Activated naive CD4-positive, alpha-beta T cell treated with anti-CD3 and anti-CD28 coated beads, Interleukin-2, amount 10 ng/mL, durations not matched to agents 7 days and 5 days (primary cell): ENCODE measurements at regions of chr9 and their contacts with region 1.

Region 1: GRCh38 chr9:34899535-34900158 is 58.4 kb upstream of the PHF24 start:
- DNase-seq: peak; percentile 90
- H3K4me3 Mint-ChIP-seq: no peak overlapping the region
- H3K27ac Mint-ChIP-seq: no peak overlapping the region
- H3K4me1 Mint-ChIP-seq: no peaks in the 10 kb centered on the region
- H3K27me3 Mint-ChIP-seq: peaks cover 30% of the 10 kb centered on the region

Region 2: GRCh38 chr9:34578241-34579103 is 321.2 kb before region 1 on chr9:
- CTCF ChIA-PET with region 1: no interaction called
- DNase-seq: no peak
- H3K4me3 Mint-ChIP-seq: no peak overlapping the region
- H3K27ac Mint-ChIP-seq: no peak overlapping the region
- H3K4me1 Mint-ChIP-seq: peaks cover 4% of the 10 kb centered on the region
- H3K27me3 Mint-ChIP-seq: peaks cover 88% of the 10 kb centered on the region

Region 3: DNA sequence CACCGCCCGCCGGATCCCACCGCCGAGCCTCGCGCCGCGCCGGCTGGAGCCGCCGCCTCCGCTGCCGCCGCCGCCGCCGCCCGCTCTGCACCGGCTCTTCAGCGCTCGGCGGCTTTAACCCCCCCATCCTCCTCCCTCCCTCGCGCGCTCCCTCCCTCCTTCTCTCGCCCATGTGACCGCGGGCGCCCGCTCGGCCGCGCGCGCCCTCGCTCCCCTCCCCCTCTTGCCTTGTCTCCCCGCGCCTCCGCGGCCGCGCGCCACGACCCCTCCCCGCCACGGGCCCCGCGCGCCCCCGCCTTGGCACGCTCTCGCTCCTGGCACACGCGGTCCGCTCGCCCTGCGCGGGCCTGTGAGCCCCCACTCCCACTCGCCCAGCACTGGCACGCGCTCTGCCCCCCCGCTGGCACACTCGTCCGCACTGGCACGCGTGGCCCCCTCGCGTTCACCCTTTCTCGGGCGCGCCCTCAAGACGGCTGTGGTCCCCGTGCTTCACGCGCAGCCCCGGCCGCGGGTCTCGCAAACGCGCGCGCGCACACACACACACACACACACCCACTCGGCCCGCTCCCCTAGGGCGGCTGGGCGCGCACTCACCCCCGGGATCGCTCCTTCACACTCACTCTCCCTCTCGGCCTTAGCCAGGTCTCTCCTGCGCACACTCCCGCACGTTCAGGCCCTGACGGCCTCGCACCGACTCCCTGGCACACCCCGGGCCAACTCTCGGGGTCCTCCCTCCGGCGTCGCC is 309.8 kb before region 1 on chr9 and contains the start of gene CNTFR:
- CTCF ChIA-PET with region 1: no interaction called
- DNase-seq: peak; percentile 46
- H3K4me3 Mint-ChIP-seq: peak within 1 kb of the TSS; percentile 61
- H3K27ac Mint-ChIP-seq: peak within 1 kb of the TSS; percentile 62
- H3K4me1 Mint-ChIP-seq: peaks cover 33% of the 10 kb centered on the region
- H3K27me3 Mint-ChIP-seq: peaks cover 100% of the 10 kb centered on the region

Region 4: DNA sequence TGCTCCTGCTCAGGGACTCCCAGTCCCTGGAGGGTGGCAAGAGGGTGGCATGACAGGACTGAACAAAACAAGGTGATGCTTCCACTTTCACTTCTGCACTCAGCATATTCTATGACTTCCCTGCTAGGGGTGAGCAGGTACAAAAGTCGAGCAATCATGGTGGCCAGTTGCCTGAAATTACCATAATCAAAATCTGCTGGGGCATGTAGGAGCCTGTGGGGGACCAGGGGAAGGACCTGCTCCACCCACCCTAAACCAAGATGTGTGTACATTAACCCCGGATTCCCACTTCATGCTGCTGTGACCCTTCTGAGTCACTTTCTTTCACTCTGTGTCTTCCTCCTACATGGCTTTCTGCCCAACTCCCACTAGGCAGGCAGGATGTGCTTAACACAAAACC is 14.9 kb before region 1 on chr9:
- CTCF ChIA-PET with region 1: interaction called, 17 read pairs
- DNase-seq: peak; percentile 28
- H3K4me3 Mint-ChIP-seq: no peak overlapping the region
- H3K27ac Mint-ChIP-seq: peak overlapping the region; percentile 46
- H3K4me1 Mint-ChIP-seq: no peaks in the 10 kb centered on the region
- H3K27me3 Mint-ChIP-seq: peaks cover 8% of the 10 kb centered on the region

Region 5: GRCh38 chr9:34985311-34985899 is 85.8 kb after region 1 on chr9:
- CTCF ChIA-PET with region 1: interaction called, 91 read pairs
- DNase-seq: peak; percentile 77
- H3K4me3 Mint-ChIP-seq: no peak overlapping the region
- H3K27ac Mint-ChIP-seq: no peak overlapping the region
- H3K4me1 Mint-ChIP-seq: peaks cover 65% of the 10 kb centered on the region
- H3K27me3 Mint-ChIP-seq: no peaks in the 10 kb centered on the region

Region 6: GRCh38 chr9:34994260-34994899 is 94.7 kb after region 1 on chr9:
- CTCF ChIA-PET with region 1: interaction called, 21 read pairs
- DNase-seq: no peak
- H3K4me3 Mint-ChIP-seq: no peak overlapping the region
- H3K27ac Mint-ChIP-seq: no peak overlapping the region
- H3K4me1 Mint-ChIP-seq: peaks cover 13% of the 10 kb centered on the region
- H3K27me3 Mint-ChIP-seq: peaks cover 6% of the 10 kb centered on the region

Region 7: DNA sequence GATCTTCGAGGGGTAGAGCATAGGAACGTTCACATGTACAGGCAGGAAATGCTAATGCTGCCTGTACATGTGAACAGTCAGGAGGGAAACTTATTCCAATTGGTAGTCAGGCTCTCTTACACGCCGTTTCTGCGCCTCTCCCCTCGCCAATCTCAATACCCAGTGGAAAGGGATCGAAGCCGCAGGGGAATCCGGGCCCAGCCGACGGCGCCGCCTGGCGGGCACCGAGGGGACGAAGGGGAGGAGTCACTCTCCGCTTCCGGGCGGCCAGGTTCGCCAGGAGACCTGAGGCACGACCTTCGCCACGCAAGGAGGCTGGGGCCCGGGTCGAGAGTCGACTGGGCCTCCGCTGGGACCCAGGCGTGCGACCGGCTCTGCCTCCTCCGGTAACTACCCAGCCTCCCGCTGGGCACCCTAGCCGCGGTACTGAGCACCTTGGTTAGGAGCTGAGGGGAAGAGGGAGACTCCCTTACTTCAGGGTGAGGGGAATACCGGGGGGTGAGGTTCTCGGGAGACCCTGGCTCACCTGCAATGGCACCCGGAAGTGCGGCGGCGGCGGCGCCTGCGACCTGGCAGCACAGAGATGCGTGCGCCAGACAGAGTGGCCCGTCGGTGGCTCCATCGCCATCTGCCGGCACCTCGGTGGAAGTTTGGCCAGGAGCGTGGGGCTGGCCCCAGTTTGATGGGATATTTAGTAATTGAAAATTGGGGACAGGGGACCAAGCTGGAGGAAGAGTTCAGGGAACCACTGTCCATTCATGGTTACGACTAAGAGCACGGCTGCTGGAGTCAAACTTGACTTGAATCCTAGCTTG is 196.6 kb after region 1 on chr9 and contains the start of gene PIGO:
- CTCF ChIA-PET with region 1: interaction called, 32 read pairs
- DNase-seq: peak; percentile 92
- H3K4me3 Mint-ChIP-seq: peak within 1 kb of the TSS; percentile 81
- H3K27ac Mint-ChIP-seq: peak within 1 kb of the TSS; percentile 92
- H3K4me1 Mint-ChIP-seq: peaks cover 51% of the 10 kb centered on the region
- H3K27me3 Mint-ChIP-seq: no peaks in the 10 kb centered on the region